ENCODE measurements at regions of chr5 and their contacts with region 1.

Region 1: GRCh38 chr5:150398722-150399523 is 13.8 kb downstream of the CD74 start:
- DNase-seq: peak; percentile 69
- ATAC-seq: peak; percentile 54
- H3K4me3 Mint-ChIP-seq: no peak overlapping the region
- H3K27ac Mint-ChIP-seq: peak overlapping the region; percentile 82
- H3K4me1 Mint-ChIP-seq: peaks cover 33% of the 10 kb centered on the region
- H3K27me3 Mint-ChIP-seq: no peaks in the 10 kb centered on the region

Region 2: GRCh38 chr5:150357326-150358260 is 41.3 kb before region 1 on chr5 and contains the start of gene TCOF1:
- CTCF ChIA-PET with region 1: interaction called, 10 read pairs
- DNase-seq: peak; percentile 98
- ATAC-seq: peak; percentile 97
- H3K4me3 Mint-ChIP-seq: peak within 1 kb of the TSS; percentile 84
- H3K27ac Mint-ChIP-seq: peak within 1 kb of the TSS; percentile 87
- H3K4me1 Mint-ChIP-seq: peaks cover 39% of the 10 kb centered on the region
- H3K27me3 Mint-ChIP-seq: peaks cover 5% of the 10 kb centered on the region
- total RNA-seq, gene TCOF1: 95.3 to 96.9 TPM

Region 3: GRCh38 chr5:150409638-150410523 is 11.0 kb after region 1 on chr5:
- CTCF ChIA-PET with region 1: interaction called, 24 read pairs
- DNase-seq: peak; percentile 84
- ATAC-seq: peak; percentile 25
- H3K4me3 Mint-ChIP-seq: peak overlapping the region; percentile 98
- H3K27ac Mint-ChIP-seq: peak overlapping the region; percentile 99
- H3K4me1 Mint-ChIP-seq: peaks cover 39% of the 10 kb centered on the region
- H3K27me3 Mint-ChIP-seq: no peaks in the 10 kb centered on the region

Region 4: DNA sequence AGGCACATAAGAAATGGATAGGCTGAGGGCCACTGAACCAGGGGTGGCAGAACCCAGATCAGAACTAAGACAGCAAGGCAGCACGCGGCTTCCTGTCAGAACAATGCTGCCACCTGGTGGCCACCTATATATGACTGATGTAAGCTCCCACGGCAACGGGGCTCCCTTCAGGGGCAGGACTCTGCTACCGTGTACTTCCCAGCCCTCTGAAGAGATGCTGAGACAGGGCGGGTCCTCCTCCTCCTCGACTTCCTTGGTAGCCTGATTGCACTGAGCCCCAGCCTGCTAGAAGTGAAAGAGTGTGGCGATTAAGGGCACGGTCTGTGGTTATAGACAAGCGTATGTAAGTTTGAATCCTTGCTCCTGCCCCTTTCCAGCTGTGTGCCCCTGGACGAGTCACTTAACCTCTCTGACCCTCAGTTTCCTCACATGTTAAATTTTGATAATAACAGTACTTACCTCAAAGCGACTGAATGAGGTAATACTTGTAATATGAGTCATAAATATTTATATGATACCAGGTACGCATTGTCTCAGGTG is 37.3 kb after region 1 on chr5:
- CTCF ChIA-PET with region 1: interaction called, 87 read pairs
- DNase-seq: peak; percentile 95
- ATAC-seq: peak; percentile 98
- H3K4me3 Mint-ChIP-seq: peak overlapping the region; percentile 38
- H3K27ac Mint-ChIP-seq: peak overlapping the region; percentile 84
- H3K4me1 Mint-ChIP-seq: peaks cover 13% of the 10 kb centered on the region
- H3K27me3 Mint-ChIP-seq: no peaks in the 10 kb centered on the region

Region 5: DNA sequence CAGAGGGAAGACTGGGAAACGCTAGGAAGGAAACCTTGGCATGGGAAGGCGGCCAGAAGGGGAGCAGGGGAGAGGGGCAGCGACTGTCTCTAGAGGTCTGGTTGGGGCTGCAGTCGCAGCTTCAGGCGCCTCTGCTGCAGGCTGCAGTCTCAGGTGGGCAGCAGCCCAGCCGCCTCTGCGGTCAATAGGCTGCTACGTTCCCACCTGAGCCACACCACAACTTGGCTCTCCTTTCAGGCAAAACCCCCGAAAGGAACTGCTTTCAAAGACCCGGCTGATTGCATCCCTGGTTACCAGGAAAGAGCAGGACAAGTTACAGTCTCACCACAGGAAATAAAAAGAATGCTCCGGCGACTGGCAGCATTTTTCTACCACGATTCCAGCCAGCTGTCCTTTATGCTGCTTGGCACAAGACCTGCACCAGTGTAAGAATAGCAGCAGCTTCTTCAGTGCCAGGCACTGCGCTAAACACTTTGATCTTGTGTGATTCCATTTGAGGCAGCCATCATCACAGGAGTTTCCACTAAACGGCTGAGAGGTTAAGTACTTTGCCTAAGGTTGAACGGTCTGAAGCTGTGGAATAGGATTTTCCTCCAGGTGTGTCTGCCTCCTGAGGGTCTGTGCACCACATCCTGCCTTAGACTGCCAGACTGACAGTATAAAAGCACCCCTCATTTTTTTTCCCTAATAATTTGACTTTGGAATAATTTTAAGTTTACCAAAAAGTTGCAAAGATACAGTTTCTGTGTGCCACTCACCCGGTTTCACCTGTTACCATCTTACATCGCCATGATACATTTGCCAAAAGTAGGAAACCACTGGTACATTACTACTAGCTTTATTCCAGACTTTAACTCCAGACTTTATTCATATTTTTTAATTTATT is 43.1 kb after region 1 on chr5:
- CTCF ChIA-PET with region 1: interaction called, 16 read pairs
- DNase-seq: no peak
- ATAC-seq: no peak
- H3K4me3 Mint-ChIP-seq: no peak overlapping the region
- H3K27ac Mint-ChIP-seq: peak overlapping the region; percentile 42
- H3K4me1 Mint-ChIP-seq: peaks cover 16% of the 10 kb centered on the region
- H3K27me3 Mint-ChIP-seq: no peaks in the 10 kb centered on the region

Region 6: DNA sequence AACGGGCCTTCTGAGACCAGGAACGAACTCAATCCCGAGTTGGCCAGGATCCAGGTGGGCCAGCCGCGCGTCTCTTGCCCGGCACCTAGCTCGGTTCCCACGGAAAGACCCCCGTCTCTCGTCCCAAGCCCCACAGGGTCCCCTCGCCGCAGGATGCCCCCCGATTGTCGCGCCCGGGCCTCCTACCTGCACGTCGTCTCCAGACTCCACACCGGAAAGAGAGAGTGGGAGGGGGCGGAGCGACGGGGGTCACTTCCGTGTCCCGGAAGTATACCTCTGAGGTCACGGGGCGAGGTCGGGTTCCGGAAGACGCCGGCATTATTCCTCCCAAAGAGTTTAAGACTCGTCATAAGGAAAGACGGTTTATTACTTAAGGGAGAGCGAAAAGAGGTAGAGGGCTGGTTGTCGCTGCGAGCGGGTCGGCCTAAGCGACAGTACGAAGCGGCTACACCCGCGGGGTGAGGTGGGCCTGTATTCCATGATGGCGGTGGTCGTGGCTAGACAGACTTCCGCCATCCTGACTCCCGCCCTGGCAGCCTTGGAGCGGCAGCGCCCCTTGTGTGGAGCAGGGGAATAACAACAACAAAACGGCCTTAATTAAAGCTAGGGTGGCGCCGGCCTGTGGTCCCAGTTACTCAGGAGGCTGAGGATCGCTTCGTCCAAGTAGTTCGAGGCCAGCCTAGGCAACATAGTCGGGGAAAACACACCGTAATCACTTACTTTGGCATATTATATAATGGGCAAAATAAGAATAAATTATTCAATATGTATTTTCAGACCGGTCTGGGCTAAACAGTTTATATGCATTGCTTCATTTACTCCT is 50.8 kb after region 1 on chr5 and contains the start of gene RPS14:
- CTCF ChIA-PET with region 1: interaction called, 21 read pairs
- DNase-seq: peak; percentile 97
- ATAC-seq: peak; percentile 94
- H3K4me3 Mint-ChIP-seq: peak within 1 kb of the TSS; percentile 96
- H3K27ac Mint-ChIP-seq: peak within 1 kb of the TSS; percentile 99
- H3K4me1 Mint-ChIP-seq: peaks cover 34% of the 10 kb centered on the region
- H3K27me3 Mint-ChIP-seq: no peaks in the 10 kb centered on the region
- total RNA-seq, gene RPS14: 1,980 to 2,218 TPM

Region 7: DNA sequence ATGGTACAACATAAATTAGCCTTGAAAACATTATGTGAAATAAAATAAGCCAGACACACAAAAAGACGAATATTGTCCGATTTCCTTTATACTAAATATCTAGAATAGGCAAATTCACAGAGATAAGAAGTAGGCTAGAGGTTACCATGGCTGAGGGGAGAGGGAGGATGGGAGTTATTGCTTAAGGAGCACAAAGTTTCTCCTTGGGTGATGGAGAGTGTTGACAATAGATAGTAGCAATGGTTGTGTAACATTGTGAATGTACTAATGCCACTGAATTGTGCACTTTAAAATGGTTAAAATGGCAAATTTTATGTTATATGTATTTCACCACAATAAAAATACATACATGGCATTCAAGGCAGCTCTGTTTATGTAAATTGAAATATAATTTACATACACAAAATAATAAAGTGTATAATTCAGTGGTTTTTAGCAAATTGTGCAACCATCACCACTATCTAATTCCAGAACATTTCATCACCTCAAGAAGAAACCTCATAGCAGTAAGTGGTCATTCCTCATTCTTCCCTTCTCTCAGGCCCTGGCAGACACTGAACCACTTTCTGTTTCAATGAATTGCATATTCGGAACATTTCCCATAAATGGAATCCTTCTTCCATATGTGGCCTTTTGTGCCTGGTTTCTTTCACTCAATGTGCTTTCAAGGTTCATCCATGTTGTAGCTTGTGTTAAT is 168.2 kb after region 1 on chr5:
- CTCF ChIA-PET with region 1: no interaction called
- DNase-seq: no peak
- ATAC-seq: no peak
- H3K4me3 Mint-ChIP-seq: no peak overlapping the region
- H3K27ac Mint-ChIP-seq: no peak overlapping the region
- H3K4me1 Mint-ChIP-seq: no peaks in the 10 kb centered on the region
- H3K27me3 Mint-ChIP-seq: peaks cover 3% of the 10 kb centered on the region

Measured in activated CD8-positive, alpha-beta memory T cell treated with anti-CD3 and anti-CD28 coated beads, Interleukin-2, amount 10 ng/mL, durations not matched to agents 7 days and 5 days (primary cell).